Heart left ventricle (tissue), 16 donors: ENCODE measurements at regions of chr6 and their contacts with region 1.

Region 1: GRCh38 chr6:20969551-20969950 is 435.3 kb downstream of the CDKAL1 start:
- DNase-seq: no peak
- ATAC-seq: no peak
- H3K4me3 ChIP-seq: no peak overlapping the region
- H3K27ac ChIP-seq: no peak overlapping the region
- H3K4me1 ChIP-seq: no peaks in the 10 kb centered on the region
- H3K27me3 ChIP-seq: no peaks in the 10 kb centered on the region
- CTCF ChIP-seq: no peak
- POLR2A ChIP-seq: no peak

Region 2: GRCh38 chr6:21295506-21296240 is 326.1 kb after region 1 on chr6:
- intact Hi-C with region 1: loop called in 1 of 10 experiments (anchors 10 kb)
- DNase-seq: no peak
- ATAC-seq: no peak
- H3K4me3 ChIP-seq: no peak overlapping the region
- H3K27ac ChIP-seq: no peak overlapping the region
- H3K4me1 ChIP-seq: no peaks in the 10 kb centered on the region
- H3K27me3 ChIP-seq: no peaks in the 10 kb centered on the region
- CTCF ChIP-seq: no peak
- POLR2A ChIP-seq: no peak